CD4-positive, alpha-beta memory T cell (primary cell): ENCODE measurements at regions of chr16 and their contacts with region 1.

Region 1: GRCh38 chr16:695355-696089 is 5.3 kb upstream of the WDR24 start:
- DNase-seq: peak; percentile 73 to 81 (median 76)
- H3K4me3 ChIP-seq: peak overlapping the region; percentile 58 to 78
- H3K4me3 Mint-ChIP-seq: peak overlapping the region; percentile 78 to 89 (median 84)
- H3K27ac ChIP-seq: no peak overlapping the region
- H3K27ac Mint-ChIP-seq: peak overlapping the region; percentile 61 to 87 (median 82)
- H3K4me1 ChIP-seq: peaks cover 42% of the 10 kb centered on the region
- H3K4me1 Mint-ChIP-seq: peaks cover 15 to 58% (median 26%) of the 10 kb centered on the region in 4 donors
- H3K27me3 ChIP-seq: no peaks in the 10 kb centered on the region
- H3K27me3 Mint-ChIP-seq: no peaks in the 10 kb centered on the region

Region 2: GRCh38 chr16:636206-637080 is 59.1 kb before region 1 on chr16 and contains the start of gene METTL26:
- CTCF ChIA-PET with region 1: no interaction called
- POLR2A ChIA-PET with region 1: interaction called, 20 read pairs
- intact Hi-C with region 1: no loop called
- DNase-seq: peak; percentile 92 to 95 (median 93)
- H3K4me3 ChIP-seq: peak within 1 kb of the TSS; percentile 81 to 86
- H3K4me3 Mint-ChIP-seq: peak within 1 kb of the TSS; percentile 95 to 100 (median 98)
- H3K27ac ChIP-seq: peak within 1 kb of the TSS; percentile 76
- H3K27ac Mint-ChIP-seq: peak within 1 kb of the TSS; percentile 94 to 100 (median 99)
- H3K4me1 ChIP-seq: peaks cover 21% of the 10 kb centered on the region
- H3K4me1 Mint-ChIP-seq: peaks cover 0 to 10% (median 5%) of the 10 kb centered on the region in 4 donors
- H3K27me3 ChIP-seq: no peaks in the 10 kb centered on the region
- H3K27me3 Mint-ChIP-seq: peaks cover 0 to 3% of the 10 kb centered on the region in 2 donors
- total RNA-seq, gene METTL26: 68.4 to 74.1 TPM

Region 3: DNA sequence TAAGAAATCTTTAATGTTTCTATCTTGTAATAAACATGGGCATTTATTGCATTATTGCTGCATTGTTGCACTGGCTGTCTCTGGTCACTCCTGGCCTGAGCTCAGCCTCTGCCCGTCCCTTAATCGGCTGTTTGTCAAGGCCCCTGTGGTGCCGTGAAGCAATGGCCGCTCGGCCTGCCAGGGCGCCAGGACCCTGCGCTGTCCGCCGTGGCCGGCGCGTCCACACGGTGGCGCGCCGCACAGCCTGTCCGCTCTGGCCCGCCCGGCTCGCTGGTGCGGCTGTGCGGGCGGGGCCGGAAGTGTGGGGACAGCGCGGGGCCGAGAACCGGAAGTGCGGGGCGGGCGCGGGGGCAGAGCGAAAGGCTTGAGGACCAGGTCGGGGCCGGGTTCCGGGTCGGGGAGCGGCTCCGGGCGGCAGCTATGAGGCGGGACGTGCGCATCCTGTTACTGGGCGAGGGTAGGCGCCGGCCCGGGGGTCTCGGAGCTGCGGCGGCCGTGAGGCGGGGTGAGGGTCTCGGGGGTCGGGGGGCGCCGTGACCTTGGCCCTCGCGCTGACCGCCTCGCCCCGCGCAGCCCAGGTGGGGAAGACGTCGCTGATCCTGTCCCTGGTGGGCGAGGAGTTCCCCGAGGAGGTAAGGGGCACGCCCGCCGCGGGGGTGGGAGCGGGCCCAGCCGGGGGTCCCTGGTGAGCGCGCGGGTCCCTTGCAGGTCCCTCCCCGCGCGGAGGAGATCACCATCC is 27.6 kb before region 1 on chr16 and contains the start of gene RHOT2:
- CTCF ChIA-PET with region 1: interaction called, 3 read pairs
- POLR2A ChIA-PET with region 1: interaction called, 23 read pairs
- intact Hi-C with region 1: no loop called
- DNase-seq: peak; percentile 88 to 93 (median 91)
- H3K4me3 ChIP-seq: peak within 1 kb of the TSS; percentile 42 to 73
- H3K4me3 Mint-ChIP-seq: peak within 1 kb of the TSS; percentile 77 to 86 (median 80)
- H3K27ac ChIP-seq: peak within 1 kb of the TSS; percentile 69
- H3K27ac Mint-ChIP-seq: peak within 1 kb of the TSS; percentile 38 to 94 (median 86)
- H3K4me1 ChIP-seq: peaks cover 23% of the 10 kb centered on the region
- H3K4me1 Mint-ChIP-seq: peaks cover 3 to 21% (median 5%) of the 10 kb centered on the region in 4 donors
- H3K27me3 ChIP-seq: no peaks in the 10 kb centered on the region
- H3K27me3 Mint-ChIP-seq: no peaks in the 10 kb centered on the region
- total RNA-seq, gene RHOT2: 254 to 263 TPM

Region 4: GRCh38 chr16:684067-684794 is 11.3 kb before region 1 on chr16 and contains the start of gene JMJD8:
- CTCF ChIA-PET with region 1: interaction called, 4 read pairs
- POLR2A ChIA-PET with region 1: interaction called, 212 read pairs
- intact Hi-C with region 1: no loop called
- DNase-seq: peak; percentile 93 to 96 (median 94)
- H3K4me3 ChIP-seq: peak within 1 kb of the TSS in 1 of 2 donors; percentile 62
- H3K4me3 Mint-ChIP-seq: peak within 1 kb of the TSS; percentile 66 to 86 (median 77)
- H3K27ac ChIP-seq: peak within 1 kb of the TSS; percentile 70
- H3K27ac Mint-ChIP-seq: peak within 1 kb of the TSS; percentile 42 to 91 (median 85)
- H3K4me1 ChIP-seq: peaks cover 58% of the 10 kb centered on the region
- H3K4me1 Mint-ChIP-seq: peaks cover 6 to 44% (median 27%) of the 10 kb centered on the region in 4 donors
- H3K27me3 ChIP-seq: no peaks in the 10 kb centered on the region
- H3K27me3 Mint-ChIP-seq: no peaks in the 10 kb centered on the region
- total RNA-seq, gene JMJD8: 45.0 to 49.0 TPM

Region 5: GRCh38 chr16:720990-721764 is 25.7 kb after region 1 on chr16 and contains the start of gene ANTKMT:
- CTCF ChIA-PET with region 1: interaction called, 3 read pairs
- POLR2A ChIA-PET with region 1: interaction called, 166 read pairs
- intact Hi-C with region 1: no loop called
- DNase-seq: peak; percentile 71 to 79 (median 77)
- H3K4me3 ChIP-seq: peak within 1 kb of the TSS; percentile 42 to 60
- H3K4me3 Mint-ChIP-seq: peak within 1 kb of the TSS; percentile 80 to 88 (median 84)
- H3K27ac ChIP-seq: peak within 1 kb of the TSS; percentile 47
- H3K27ac Mint-ChIP-seq: peak within 1 kb of the TSS; percentile 47 to 91 (median 84)
- H3K4me1 ChIP-seq: peaks cover 30% of the 10 kb centered on the region
- H3K4me1 Mint-ChIP-seq: peaks cover 3 to 33% (median 12%) of the 10 kb centered on the region in 4 donors
- H3K27me3 ChIP-seq: no peaks in the 10 kb centered on the region
- H3K27me3 Mint-ChIP-seq: no peaks in the 10 kb centered on the region
- total RNA-seq, gene ANTKMT: 21.5 to 23.5 TPM

Region 6: GRCh38 chr16:1225051-1225451 is 529.5 kb after region 1 on chr16 and contains the start of gene TPSG1:
- CTCF ChIA-PET with region 1: no interaction called
- POLR2A ChIA-PET with region 1: no interaction called
- intact Hi-C with region 1: no loop called
- DNase-seq: peak in 1 of 5 donors; percentile 33
- H3K4me3 ChIP-seq: no peak within 1 kb of the TSS
- H3K4me3 Mint-ChIP-seq: no peak within 1 kb of the TSS
- H3K27ac ChIP-seq: no peak within 1 kb of the TSS
- H3K27ac Mint-ChIP-seq: no peak within 1 kb of the TSS
- H3K4me1 ChIP-seq: no peaks in the 10 kb centered on the region
- H3K4me1 Mint-ChIP-seq: no peaks in the 10 kb centered on the region
- H3K27me3 ChIP-seq: no peaks in the 10 kb centered on the region
- H3K27me3 Mint-ChIP-seq: peaks cover 1 to 4% of the 10 kb centered on the region in 2 donors
- total RNA-seq, gene TPSG1: not detected